Right cardiac atrium (tissue), 5 donors: ENCODE measurements at regions of chr14 and their contacts with region 1.

Region 1: GRCh38 chr14:68911594-68912227 is 67.4 kb downstream of the ACTN1 start:
- DNase-seq: peak; percentile 69 to 87 (median 82)
- ATAC-seq: peak; percentile 78 to 84
- H3K4me3 ChIP-seq: no peak overlapping the region
- H3K27ac ChIP-seq: no peak overlapping the region
- H3K4me1 ChIP-seq: peaks cover 3% of the 10 kb centered on the region
- H3K27me3 ChIP-seq: no peaks in the 10 kb centered on the region

Region 2: DNA sequence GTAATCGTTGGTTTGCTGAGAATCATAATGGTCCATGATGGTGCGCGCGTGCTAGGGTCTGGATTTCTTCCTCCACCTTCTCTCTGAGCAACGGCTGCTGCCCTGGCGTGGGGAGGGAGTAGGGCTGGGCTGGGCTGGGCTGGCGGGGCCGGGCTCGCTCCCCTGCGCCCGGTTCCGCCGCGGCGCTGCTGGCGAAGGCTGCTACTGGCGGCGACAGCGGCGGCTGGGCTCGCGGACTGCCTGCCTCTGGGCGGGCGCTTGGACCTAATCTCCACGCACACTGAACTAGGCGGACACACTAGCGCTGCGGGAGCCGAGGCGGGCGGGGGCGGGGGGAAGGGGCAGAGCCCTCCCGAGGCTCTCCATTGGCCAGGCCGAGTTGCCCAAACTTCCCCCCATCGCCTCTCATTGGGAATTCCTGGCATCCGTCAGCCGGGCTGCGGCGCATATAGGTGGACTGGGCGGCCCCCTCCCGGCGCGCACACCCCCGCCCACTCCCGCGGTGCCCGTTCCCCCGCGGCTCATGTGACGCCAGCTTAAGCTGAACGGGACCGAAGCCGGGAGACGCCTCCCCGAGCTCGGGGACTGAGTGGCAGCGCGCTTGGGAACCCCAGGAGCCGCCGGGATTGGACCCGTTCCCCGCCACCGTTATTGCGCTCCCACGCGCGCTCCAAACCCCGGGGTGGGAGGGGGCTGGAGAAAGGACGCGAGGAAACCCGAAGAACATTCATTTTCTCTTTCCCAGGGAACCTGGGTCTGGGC is 67.5 kb after region 1 on chr14 and contains the start of gene ACTN1:
- intact Hi-C with region 1: loop called in 2 of 4 experiments (anchors 5 to 10 kb)
- DNase-seq: peak; percentile 96 to 97 (median 97)
- ATAC-seq: peak; percentile 89 to 90
- H3K4me3 ChIP-seq: peak within 1 kb of the TSS; percentile 92
- H3K27ac ChIP-seq: peak within 1 kb of the TSS; percentile 99
- H3K4me1 ChIP-seq: peaks cover 19% of the 10 kb centered on the region
- H3K27me3 ChIP-seq: no peaks in the 10 kb centered on the region
- total RNA-seq, gene ACTN1: 133 to 305 (median 171) TPM

Region 3: GRCh38 chr14:69002069-69002468 is 90.4 kb after region 1 on chr14:
- intact Hi-C with region 1: loop called in 3 of 4 experiments (anchors 2 to 5 kb)
- DNase-seq: peak in 2 of 3 donors; percentile 33 to 75
- ATAC-seq: peak; percentile 82 to 85
- H3K4me3 ChIP-seq: no peak overlapping the region
- H3K27ac ChIP-seq: no peak overlapping the region
- H3K4me1 ChIP-seq: peaks cover 4% of the 10 kb centered on the region
- H3K27me3 ChIP-seq: no peaks in the 10 kb centered on the region

Region 4: GRCh38 chr14:69101331-69101826 is 189.7 kb after region 1 on chr14:
- intact Hi-C with region 1: loop called (anchors 5 to 10 kb)
- DNase-seq: no peak
- ATAC-seq: peak; percentile 89 to 91
- H3K4me3 ChIP-seq: no peak overlapping the region
- H3K27ac ChIP-seq: no peak overlapping the region
- H3K4me1 ChIP-seq: no peaks in the 10 kb centered on the region
- H3K27me3 ChIP-seq: no peaks in the 10 kb centered on the region

Region 5: DNA sequence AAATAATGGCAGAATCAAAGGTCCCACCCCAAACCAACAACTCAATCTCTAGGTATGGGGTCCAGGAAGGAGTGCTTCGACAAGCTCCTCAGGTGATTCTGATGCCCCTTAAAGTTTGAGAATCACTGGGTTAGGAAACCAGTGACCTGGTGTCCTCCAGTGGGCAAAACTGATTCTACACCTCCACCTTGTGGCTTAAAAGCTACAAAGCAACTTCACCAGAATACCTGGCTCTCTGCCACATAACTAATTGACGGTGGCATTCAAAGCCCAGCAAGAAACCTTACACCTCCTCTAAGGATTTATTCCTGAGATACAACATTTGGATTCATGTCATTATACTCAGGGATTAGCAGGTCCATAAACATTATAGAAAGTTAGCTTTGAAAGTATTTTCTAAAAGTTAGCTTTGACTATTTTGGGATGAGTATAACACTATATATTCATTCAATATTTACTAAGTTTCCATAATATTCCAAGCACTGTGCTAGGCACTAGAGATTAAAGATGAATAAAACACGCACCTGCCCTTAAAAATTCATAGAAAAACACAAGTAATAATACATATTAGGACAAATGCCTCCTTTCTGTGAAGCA is 195.8 kb after region 1 on chr14:
- intact Hi-C with region 1: loop called in 3 of 4 experiments (anchors 5 kb)
- DNase-seq: no peak
- ATAC-seq: peak; percentile 46 to 70
- H3K4me3 ChIP-seq: no peak overlapping the region
- H3K27ac ChIP-seq: no peak overlapping the region
- H3K4me1 ChIP-seq: peaks cover 4% of the 10 kb centered on the region
- H3K27me3 ChIP-seq: no peaks in the 10 kb centered on the region